Activated T-helper 1 cell treated with anti-CD3 and anti-CD28 coated beads, Interleukin-12 subunit alpha, Interleukin-12 subunit beta, Interleukin-2, Interleukin-4 antibody, amounts not matched to agents 30 ng/mL and 10 ng/mL and 1 ng/mL, durations not matched to agents 14 hours and 24 hours and 36 hours (primary cell): ENCODE measurements at regions of chr11 and their contacts with region 1.

Region 1: DNA sequence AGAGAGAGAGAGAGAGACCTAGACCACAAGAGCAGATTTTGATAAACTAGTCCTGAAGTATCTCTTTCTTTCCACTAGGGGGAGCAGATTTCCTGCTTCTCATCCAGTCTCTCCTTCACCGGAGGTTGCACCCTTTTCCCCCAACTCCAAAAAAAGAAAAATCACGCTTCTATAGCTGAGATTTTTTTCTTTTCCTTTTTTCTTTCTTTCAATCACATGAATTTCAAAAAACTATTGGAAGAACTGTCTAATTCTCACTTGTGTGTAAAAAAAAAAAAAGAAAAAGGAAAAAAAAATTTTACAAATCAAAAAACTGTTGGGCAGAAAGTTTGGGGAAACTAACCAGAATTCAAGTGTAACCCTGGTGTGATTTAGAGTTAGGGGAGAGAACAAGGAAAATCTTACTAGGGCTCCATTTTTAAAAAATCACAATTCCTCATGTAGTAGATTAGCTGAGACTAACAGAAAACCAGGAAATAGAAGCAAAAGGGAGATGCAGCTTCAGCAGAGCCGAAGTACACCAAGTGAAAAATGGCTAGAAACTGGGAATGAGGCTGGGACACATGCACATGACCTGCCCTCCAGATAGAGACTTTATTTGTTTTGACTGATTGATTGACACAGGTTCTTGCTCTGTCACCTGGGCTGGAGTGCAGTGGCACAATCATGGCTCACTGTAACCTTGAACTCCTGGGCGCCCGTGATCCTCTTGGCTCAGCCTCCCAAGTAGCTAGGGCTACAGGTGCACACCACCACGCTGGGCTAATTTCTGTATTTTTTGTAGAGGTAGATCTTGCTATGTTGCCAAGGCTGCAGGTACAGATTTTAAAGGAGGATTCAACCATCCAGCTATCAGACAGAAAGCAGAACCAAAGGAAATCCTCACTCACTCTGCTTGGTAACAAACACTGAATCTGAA is 27.1 kb downstream of the SDHD start:
- DNase-seq: no peak
- H3K4me3 Mint-ChIP-seq: no peak overlapping the region
- H3K27ac Mint-ChIP-seq: no peak overlapping the region
- H3K4me1 Mint-ChIP-seq: no peaks in the 10 kb centered on the region
- H3K27me3 Mint-ChIP-seq: no peaks in the 10 kb centered on the region

Region 2: GRCh38 chr11:110479108-110480101 is 1634.4 kb before region 1 on chr11:
- intact Hi-C with region 1: no loop called
- DNase-seq: no peak
- H3K4me3 Mint-ChIP-seq: no peak overlapping the region
- H3K27ac Mint-ChIP-seq: no peak overlapping the region
- H3K4me1 Mint-ChIP-seq: peaks cover 5% of the 10 kb centered on the region
- H3K27me3 Mint-ChIP-seq: peaks cover 2% of the 10 kb centered on the region

Region 3: DNA sequence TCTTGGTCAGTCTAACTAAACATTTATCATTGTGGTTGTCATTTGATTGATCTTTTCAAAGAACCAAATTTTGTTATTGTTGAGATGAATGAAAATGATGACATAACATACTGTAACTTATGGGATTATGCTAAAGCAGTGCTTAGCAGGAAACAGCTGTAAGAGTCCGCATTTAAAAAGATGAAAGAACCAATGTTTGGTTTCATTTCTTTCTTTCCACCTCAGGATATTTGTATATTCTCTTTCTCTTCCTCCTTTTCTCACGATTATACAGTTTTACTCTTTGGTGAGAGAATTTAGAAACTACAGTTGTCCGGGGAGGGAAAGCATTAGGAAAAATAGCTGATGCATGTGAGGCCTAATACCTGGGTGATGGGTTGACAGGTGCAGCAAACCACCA is 63.1 kb before region 1 on chr11:
- intact Hi-C with region 1: no loop called
- DNase-seq: no peak
- H3K4me3 Mint-ChIP-seq: no peak overlapping the region
- H3K27ac Mint-ChIP-seq: no peak overlapping the region
- H3K4me1 Mint-ChIP-seq: peaks cover 12% of the 10 kb centered on the region
- H3K27me3 Mint-ChIP-seq: no peaks in the 10 kb centered on the region

Region 4: DNA sequence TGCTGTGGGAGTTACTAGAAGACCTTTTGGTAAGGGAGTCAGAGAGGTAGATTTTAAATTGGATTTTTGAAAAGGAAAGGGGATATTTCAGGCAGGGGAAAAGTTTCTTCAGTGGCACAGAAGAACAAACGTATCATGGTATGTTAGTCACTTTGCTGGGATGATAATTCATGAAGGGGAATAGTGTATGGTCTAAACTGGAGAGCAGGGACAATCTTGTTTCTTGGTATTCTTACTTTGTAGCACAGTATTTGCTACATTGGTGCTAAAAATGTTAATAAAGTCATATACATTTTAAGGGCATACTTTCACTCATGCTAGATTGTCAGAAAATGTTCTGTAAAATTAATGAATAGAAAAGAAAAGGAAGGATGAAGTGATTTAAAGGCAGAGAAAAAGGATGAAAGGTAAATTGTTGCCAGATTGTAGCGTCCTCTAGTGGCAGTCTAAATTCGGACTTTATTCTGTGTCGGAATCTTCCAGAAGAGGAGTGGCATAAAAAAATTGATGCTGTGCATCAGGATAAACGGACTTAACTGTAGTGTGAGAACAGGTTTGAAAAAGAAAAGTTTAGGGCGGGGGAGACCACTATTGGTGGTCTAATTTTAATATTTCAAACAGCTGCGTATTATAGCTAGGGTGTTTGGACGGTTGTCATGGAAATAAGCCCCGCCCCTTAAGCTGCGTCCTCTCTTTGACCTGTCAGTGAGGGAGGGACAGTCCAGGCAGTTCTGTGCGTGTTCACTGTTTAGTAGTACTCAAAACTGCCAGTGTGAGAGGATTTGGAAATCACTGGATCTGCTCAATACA is 61.2 kb after region 1 on chr11 and contains the start of gene BCO2:
- intact Hi-C with region 1: loop called (anchors 1 kb)
- DNase-seq: peak; percentile 14
- H3K4me3 Mint-ChIP-seq: peak within 1 kb of the TSS; percentile 38
- H3K27ac Mint-ChIP-seq: peak within 1 kb of the TSS; percentile 72
- H3K4me1 Mint-ChIP-seq: peaks cover 13% of the 10 kb centered on the region
- H3K27me3 Mint-ChIP-seq: peaks cover 15% of the 10 kb centered on the region
- total RNA-seq, gene BCO2: 0.49 and 1.6 TPM in 2 replicates

Region 5: DNA sequence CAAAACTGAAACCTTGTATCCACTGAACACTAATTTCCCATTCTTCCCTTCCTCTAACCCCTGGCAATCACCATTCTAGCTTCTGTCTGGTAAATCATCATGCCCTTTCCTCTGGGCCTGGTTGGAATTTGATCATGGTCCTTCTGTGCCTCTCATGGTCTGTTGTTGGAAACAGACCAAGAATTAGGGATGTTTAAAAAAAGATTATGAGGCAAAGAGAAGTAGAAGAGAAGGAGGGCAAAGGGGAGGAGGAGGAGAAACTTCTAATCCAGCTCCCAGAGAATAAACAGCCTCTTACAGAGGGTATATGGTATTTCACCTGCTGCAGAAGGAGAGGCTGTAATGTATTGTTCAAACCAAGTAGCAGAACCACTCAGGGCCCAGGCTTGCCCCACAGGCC is 72.1 kb after region 1 on chr11:
- intact Hi-C with region 1: no loop called
- DNase-seq: no peak
- H3K4me3 Mint-ChIP-seq: no peak overlapping the region
- H3K27ac Mint-ChIP-seq: no peak overlapping the region
- H3K4me1 Mint-ChIP-seq: no peaks in the 10 kb centered on the region
- H3K27me3 Mint-ChIP-seq: peaks cover 6% of the 10 kb centered on the region

Region 6: GRCh38 chr11:112280268-112281126 is 166.7 kb after region 1 on chr11:
- intact Hi-C with region 1: loop called (anchors 1 kb)
- DNase-seq: peak; percentile 64
- H3K4me3 Mint-ChIP-seq: peak overlapping the region; percentile 85
- H3K27ac Mint-ChIP-seq: peak overlapping the region; percentile 77
- H3K4me1 Mint-ChIP-seq: peaks cover 39% of the 10 kb centered on the region
- H3K27me3 Mint-ChIP-seq: peaks cover 4% of the 10 kb centered on the region